ENCODE measurements at regions of chr1 and their contacts with region 1.

Region 1: GRCh38 chr1:36625935-36626310 is 143.2 kb upstream of the CSF3R start:
- DNase-seq: no peak
- ATAC-seq: no peak
- H3K4me3 ChIP-seq: no peak overlapping the region
- H3K27ac ChIP-seq: no peak overlapping the region
- H3K4me1 ChIP-seq: no peaks in the 10 kb centered on the region
- H3K27me3 ChIP-seq: no peaks in the 10 kb centered on the region
- CTCF ChIP-seq: no peak

Region 2: DNA sequence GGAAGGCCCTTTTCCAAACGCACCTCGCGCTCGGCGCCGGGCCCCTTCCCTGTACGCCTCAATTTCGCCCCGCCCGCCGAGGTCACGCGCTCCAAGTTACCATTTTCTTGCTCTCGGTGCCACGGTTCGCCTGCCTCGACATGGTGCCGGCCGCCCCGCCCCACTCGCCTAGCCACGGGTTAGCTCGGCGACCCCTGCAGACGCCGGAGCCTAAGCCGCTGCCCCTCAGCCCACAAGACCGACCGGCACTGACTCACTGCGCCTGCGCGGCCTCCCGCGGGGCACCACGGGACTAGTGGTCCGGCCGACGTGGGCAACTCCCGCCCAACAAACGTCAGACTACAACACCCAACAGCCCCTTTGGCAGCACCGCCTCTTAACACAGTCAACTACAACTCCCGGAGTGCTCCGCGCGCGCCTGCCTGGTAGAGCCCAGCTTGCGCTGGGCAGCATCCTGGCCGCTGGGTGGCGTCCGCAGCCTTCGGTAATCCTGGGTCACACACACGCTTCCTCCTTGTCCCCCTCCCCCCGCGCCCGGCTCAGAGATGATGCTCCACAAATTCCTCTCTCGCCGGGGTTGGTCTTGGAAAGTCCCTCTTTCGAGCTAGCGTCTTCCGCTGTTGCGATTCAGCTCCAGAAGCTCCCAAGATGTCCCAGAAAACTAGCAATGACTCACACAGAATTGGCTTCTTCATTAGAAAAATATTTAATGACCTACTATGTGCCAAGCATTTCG is 476.5 kb before region 1 on chr1 and contains the start of gene TRAPPC3:
- CTCF ChIA-PET with region 1: no interaction called
- POLR2A ChIA-PET with region 1: no interaction called
- in situ Hi-C with region 1: no loop called
- intact Hi-C with region 1: no loop called
- DNase-seq: peak; percentile 98
- ATAC-seq: peak; percentile 93
- H3K4me3 ChIP-seq: peak within 1 kb of the TSS; percentile 89 to 98
- H3K27ac ChIP-seq: peak within 1 kb of the TSS; percentile 98
- H3K4me1 ChIP-seq: peaks cover 33% of the 10 kb centered on the region
- H3K27me3 ChIP-seq: no peaks in the 10 kb centered on the region
- CTCF ChIP-seq: peak; percentile 98
- total RNA-seq, gene TRAPPC3: 98.7 TPM

Region 3: DNA sequence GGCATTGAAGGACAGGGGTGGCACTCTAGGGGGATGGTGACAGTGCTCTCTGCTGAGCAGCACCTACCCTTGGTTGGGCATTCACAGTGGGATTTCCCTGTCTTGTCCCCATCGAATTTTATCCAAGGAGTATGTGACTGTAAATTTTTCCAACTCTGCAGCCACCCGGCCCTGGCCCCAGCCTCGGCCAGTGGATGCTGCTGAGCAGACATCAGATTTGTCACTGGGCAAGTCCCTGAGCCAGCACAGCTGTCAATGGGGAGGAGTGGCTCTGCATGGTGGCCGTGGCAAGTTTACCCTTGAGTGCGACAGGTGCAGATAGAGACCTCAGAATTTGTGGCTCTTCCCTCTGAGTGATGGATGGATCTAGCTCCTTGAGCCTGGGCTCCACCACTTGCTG is 96.9 kb after region 1 on chr1:
- CTCF ChIA-PET with region 1: no interaction called
- POLR2A ChIA-PET with region 1: no interaction called
- in situ Hi-C with region 1: no loop called
- intact Hi-C with region 1: no loop called
- DNase-seq: no peak
- ATAC-seq: no peak
- H3K4me3 ChIP-seq: no peak overlapping the region
- H3K27ac ChIP-seq: no peak overlapping the region
- H3K4me1 ChIP-seq: no peaks in the 10 kb centered on the region
- H3K27me3 ChIP-seq: peaks cover 22% of the 10 kb centered on the region
- CTCF ChIP-seq: no peak

Region 4: DNA sequence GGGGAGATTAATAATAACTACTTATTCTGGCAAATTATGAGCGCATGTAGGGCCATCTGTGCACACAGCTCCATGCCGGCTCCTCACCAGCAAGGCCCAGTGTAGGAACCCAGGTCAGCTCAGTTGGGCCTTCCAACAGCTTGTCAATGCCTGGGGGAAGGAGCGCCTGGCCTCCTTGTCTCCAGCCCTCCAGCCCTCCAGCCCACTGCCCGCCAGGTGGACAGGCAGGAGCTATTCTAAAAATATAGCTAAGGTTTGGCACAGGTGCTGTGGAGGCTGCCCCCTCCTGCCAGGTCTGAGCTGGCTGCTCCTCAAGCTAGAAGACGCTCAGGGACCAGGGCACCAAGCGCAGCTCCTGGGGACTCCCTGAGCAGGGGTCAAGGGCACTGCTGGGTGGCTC is 322.7 kb after region 1 on chr1:
- CTCF ChIA-PET with region 1: no interaction called
- POLR2A ChIA-PET with region 1: interaction called, 12 read pairs
- in situ Hi-C with region 1: no loop called
- intact Hi-C with region 1: no loop called
- DNase-seq: no peak
- ATAC-seq: no peak
- H3K4me3 ChIP-seq: no peak overlapping the region
- H3K27ac ChIP-seq: no peak overlapping the region
- H3K4me1 ChIP-seq: no peaks in the 10 kb centered on the region
- H3K27me3 ChIP-seq: peaks cover 2% of the 10 kb centered on the region; the same call in 1 of the 2 replicates
- CTCF ChIP-seq: no peak

Measured in Panc1 (cell line).